ENCODE measurements at regions of chr21 and their contacts with region 1.

Region 1: GRCh38 chr21:44454747-44455523 is at the start of gene LRRC3:
- DNase-seq: peak; percentile 97
- CTCF ChIP-seq: no peak

Region 2: DNA sequence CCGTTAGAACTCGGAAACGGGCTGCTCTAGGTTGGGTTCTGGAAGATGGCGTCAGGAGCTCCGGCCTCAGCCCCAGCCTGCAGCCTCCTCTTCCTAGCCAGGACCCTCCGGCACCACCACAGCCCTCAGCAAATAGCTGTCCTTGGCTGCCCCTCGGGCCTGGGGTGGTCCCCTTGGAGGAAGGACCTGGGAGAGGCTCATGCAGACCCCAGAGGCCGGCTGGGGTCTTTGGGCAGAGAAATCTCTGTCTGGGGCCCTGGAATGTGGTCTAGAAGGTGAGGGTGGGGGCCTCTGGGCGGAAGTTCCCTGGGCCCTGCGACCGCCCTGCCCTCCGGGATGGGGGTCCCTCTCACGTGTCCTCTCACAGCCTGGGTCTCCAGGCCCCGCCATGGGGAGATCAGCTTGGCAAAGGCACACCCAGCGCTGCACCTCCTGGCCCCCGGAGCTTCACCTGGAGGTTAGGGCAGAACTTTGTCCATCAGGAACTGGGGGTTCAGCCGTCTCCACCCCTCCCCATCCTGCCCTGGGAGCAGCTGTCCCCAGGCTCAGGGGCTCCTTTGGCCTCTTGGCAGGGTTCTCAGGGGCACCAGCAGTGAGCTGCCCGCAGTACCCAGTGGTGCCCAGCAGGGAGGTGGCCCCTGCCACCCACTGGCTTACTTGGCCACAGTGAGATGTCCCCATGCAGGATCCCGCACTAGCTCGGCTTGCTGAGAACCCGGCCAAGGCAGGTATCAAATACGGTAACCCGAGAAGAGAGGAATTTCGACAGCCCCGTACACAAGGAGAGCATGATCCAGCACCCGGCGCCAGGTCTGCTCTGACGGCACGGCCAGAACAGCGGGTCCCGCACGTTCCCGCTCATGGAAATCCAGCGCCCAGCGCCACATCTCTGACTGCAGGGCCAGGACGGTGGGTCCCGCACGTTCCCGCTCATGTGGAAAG is 629.0 kb before region 1 on chr21:
- in situ Hi-C with region 1: loop called (anchors 25 kb)
- DNase-seq: no peak
- CTCF ChIP-seq: no peak

Region 3: DNA sequence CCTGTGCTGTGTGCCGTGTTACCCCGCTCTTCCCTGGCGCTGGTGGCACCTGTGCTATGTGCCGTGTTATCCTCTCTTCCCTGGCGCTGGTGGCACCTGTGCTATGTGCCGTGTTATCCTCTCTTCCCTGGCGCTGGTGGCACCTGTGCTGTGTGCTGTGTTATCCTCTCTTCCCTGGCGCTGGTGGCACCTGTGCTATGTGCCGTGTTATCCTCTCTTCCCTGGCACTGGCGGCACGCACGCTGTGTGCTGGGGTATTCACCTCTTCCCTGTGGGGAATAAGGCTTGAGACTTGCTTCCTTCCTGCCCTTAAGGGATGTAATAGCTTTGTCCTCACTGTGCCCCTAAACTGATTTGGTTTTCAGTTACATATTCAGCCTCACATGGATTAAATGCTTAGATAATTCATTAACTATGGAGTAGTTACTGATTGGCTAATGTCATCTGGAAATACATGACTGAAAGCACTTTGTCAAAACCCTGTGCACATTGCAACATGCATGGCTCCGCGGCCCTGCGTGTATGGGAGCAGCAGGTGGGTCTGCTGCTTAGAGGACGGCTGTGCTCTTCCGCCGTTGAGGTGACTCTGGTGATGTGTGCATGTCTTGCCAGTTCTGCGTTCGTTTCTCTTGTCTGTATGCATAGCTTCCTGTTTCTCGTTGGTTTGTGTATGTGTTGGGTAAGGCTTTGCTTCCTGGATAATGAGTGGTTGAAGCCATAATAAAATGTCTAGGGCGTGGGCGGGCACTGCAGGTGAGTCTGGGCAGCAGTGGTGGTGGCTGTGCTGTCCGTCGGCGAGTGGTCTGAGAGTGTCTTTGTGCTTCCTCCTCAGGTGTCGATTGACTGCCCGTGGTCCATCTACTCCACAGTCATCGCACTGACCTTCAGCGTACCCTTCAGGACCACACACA is 365.7 kb before region 1 on chr21:
- in situ Hi-C with region 1: loop called (anchors 25 kb)
- DNase-seq: no peak
- CTCF ChIP-seq: no peak

Region 4: DNA sequence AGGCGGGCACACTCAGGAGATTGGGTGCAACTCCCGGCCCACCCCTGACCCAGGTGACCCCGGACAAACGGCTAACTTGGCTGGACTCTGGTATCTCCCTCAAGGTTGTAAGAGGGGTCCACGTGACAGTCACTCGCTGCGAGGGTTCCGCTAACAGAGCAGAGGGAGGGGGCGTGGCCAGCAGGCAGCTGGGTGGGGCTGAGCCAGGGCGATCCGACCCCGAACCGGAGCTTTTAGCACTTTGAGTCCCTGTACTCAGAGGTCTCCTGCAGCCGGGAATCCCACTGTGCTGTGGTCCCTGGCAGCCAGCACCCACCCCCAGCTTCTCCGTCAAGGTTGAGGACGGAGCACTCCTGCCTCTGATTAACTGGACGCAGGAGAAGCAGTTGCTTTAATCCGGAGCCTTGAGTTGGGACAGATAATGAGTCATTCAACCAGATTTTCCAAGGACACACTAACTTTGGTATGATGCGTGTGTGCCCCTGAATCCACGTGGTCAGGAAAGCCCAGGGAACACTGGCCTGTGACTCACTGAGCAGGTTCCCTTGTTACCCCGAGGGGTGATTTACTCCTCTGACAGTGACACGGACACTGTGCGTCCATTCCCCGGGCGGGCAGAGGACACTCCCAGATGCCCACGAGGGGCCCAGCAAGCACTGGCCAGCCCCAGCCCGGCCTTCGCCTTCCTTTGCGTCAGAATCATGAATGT is 84.8 kb before region 1 on chr21:
- in situ Hi-C with region 1: loop called (anchors 25 kb)
- DNase-seq: peak; percentile 44
- CTCF ChIP-seq: no peak

Region 5: DNA sequence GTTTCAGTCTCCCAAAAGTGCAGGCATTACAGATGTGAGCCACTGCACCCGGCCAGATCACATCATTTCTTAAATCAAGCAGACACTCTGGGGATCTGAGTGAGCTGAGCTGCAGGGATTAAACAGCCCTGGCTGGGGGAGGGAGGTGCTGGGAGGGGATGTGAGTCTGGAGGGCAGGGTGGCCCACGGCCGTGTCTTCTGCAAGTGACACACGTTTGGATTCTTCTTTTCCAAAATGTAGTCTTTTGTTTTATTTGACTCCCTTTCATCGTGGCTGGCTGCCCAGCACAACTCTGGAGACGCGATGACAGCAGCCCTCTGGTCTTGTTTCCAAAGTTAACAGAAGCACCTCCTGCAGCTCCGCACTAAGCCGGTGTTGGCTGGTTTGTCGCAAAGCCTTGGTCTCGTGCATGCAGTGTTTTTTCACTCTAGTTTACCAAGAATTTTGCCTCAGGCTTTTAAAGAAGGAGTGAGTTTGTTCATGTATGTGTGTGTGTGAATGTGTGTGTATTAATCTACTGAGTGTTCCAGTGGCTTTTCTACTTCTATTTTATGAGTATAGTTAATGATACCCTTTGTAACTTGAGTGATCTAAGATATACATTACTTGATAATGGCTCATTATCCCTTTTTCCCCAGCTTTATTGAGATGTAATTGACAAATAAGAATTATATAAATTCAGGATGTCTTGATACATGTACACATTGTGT is 128.3 kb after region 1 on chr21:
- in situ Hi-C with region 1: no loop called
- DNase-seq: no peak
- CTCF ChIP-seq: no peak